ENCODE measurements at regions of chr10 and their contacts with region 1.

Region 1: GRCh38 chr10:118568327-118568848 is 27.1 kb downstream of the PRLHR start:
- DNase-seq: peak; percentile 63
- H3K4me3 ChIP-seq: no peak overlapping the region; a peak in 1 of 4 replicates
- H3K27ac ChIP-seq: no peak overlapping the region
- H3K4me1 ChIP-seq: peaks cover 0 to 29% of the 10 kb centered on the region in 2 experiments; a peak in 2 of 4 replicates
- H3K27me3 ChIP-seq: no peaks in the 10 kb centered on the region
- CTCF ChIP-seq: peak; percentile 76
- EP300 ChIP-seq: no peak
- RAD21 ChIP-seq: peak; percentile 88

Region 2: GRCh38 chr10:117568334-117568733 is 1000.1 kb before region 1 on chr10:
- CTCF ChIA-PET with region 1: no interaction called
- POLR2A ChIA-PET with region 1: no interaction called
- DNase-seq: no peak
- H3K4me3 ChIP-seq: no peak overlapping the region
- H3K27ac ChIP-seq: no peak overlapping the region
- H3K4me1 ChIP-seq: no peaks in the 10 kb centered on the region
- H3K27me3 ChIP-seq: no peaks in the 10 kb centered on the region
- CTCF ChIP-seq: no peak
- EP300 ChIP-seq: no peak
- RAD21 ChIP-seq: no peak

Region 3: GRCh38 chr10:118522791-118523498 is 45.4 kb before region 1 on chr10:
- CTCF ChIA-PET with region 1: no interaction called
- POLR2A ChIA-PET with region 1: no interaction called
- DNase-seq: no peak
- H3K4me3 ChIP-seq: no peak overlapping the region
- H3K27ac ChIP-seq: no peak overlapping the region
- H3K4me1 ChIP-seq: no peaks in the 10 kb centered on the region
- H3K27me3 ChIP-seq: no peaks in the 10 kb centered on the region
- CTCF ChIP-seq: no peak
- EP300 ChIP-seq: no peak
- RAD21 ChIP-seq: no peak

Region 4: DNA sequence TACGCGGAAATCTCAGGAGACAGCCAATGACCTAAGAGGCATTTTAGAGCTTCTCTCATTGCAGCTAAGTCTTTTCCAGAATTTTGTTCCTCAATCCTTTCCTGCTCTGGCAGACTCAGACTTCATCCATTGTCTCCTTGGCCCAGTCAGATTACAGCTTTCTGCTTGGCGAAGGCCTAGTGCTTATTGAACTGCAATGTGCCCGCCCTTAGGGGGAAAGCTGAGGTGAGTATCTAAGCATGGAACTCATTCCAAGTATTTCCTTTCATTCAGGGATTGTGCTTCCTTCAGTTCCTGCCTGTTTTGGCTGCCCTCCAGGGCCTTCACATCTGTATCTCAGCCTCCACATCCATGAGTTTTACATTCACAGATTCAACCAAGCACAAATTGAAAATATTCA is 10.4 kb before region 1 on chr10:
- CTCF ChIA-PET with region 1: interaction called, 14 read pairs
- POLR2A ChIA-PET with region 1: no interaction called
- DNase-seq: no peak
- H3K4me3 ChIP-seq: no peak overlapping the region
- H3K27ac ChIP-seq: no peak overlapping the region
- H3K4me1 ChIP-seq: no peaks in the 10 kb centered on the region
- H3K27me3 ChIP-seq: no peaks in the 10 kb centered on the region
- CTCF ChIP-seq: no peak
- EP300 ChIP-seq: no peak
- RAD21 ChIP-seq: no peak

Region 5: DNA sequence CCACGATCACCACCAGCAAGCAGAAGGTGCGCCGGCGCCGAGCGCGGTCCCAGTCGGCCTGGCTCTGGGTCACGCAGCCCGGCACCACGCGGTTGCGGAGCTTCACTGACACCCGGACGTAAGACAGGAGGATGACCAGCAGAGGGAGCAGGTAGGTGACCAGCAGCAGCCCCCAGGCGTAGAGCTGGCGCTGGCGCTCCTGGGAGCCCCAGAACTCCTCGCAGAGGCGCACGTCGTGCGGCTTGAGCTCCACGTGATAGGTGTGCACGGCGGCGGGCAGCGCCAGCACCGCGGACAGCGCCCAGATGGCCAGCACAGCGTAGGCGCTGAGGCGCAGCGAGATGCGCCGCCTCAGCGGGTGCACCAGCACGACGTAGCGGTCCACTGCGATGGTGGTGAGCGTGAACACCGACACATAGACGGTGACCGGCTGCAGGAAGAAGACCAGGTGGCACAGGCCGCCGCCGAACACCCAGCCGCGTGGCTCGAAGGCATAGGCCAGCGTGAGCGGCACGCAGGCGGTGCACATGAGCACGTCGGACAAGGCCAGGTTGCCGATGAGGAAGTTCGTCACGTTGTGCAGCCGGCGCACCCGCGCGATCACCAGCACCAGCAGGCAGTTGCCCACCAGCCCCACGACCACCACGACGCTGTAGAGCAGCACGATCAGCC is 26.1 kb after region 1 on chr10:
- CTCF ChIA-PET with region 1: interaction called, 29 read pairs
- POLR2A ChIA-PET with region 1: no interaction called
- DNase-seq: peak; percentile 75
- H3K4me3 ChIP-seq: no peak overlapping the region; a peak in 1 of 4 replicates
- H3K27ac ChIP-seq: no peak overlapping the region
- H3K4me1 ChIP-seq: peaks cover 0 to 19% of the 10 kb centered on the region in 2 experiments; a peak in 2 of 4 replicates
- H3K27me3 ChIP-seq: peaks cover 10% of the 10 kb centered on the region; the same call in 1 of the 2 replicates
- CTCF ChIP-seq: peak; percentile 23; the same call in 1 of the 2 replicates
- EP300 ChIP-seq: no peak
- RAD21 ChIP-seq: no peak; the same call in 1 of the 2 replicates

Region 6: DNA sequence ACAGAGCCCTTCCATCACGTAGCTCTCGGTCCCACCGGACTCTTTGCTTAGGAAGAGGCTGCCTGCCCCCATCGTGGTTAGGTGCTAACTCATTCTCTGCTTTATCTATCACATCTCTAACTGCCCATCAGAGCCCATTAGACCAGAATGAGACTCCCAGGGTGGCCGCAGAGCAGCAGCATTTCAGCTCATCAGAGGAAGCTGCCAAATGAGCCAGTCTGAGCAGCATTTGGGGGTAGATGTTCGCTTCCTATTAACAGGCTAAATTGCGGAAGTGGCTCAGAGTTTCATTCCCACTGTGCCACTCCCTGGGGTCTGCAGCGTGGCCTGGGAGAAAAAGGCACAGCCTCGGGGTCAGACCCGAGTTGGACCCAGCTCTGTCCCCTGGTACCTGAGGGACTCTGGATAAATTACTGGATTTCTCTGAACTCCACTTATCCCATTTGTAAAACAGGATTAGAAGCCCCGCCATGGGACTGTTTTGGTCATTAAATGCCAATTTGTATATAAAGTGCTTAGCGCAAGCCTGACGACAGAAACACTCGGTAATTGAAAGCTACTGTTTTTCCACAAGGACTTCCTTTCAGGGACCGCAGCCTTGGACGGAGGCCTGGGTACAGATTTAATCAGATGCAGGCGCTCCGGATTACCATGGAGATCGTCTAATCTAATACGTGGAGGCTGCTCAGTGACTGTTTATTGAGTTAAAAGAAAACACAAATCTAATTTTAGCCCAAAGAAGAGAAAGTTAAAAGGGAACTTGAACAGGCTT is 100.8 kb after region 1 on chr10:
- CTCF ChIA-PET with region 1: interaction called, 67 read pairs
- POLR2A ChIA-PET with region 1: interaction called, 3 read pairs
- DNase-seq: peak; percentile 81
- H3K4me3 ChIP-seq: peak overlapping the region; percentile 32 to 38
- H3K27ac ChIP-seq: peak overlapping the region; percentile 29 to 99; a peak in 3 of 4 replicates
- H3K4me1 ChIP-seq: peaks cover 14 to 50% of the 10 kb centered on the region in 2 experiments; a peak in 3 of 4 replicates
- H3K27me3 ChIP-seq: no peaks in the 10 kb centered on the region; the same call in 1 of the 2 replicates
- CTCF ChIP-seq: no peak
- EP300 ChIP-seq: peak in 1 of 2 experiments; percentile 94; a peak in 2 of 4 replicates
- RAD21 ChIP-seq: no peak; the same call in none of the 2 replicates

Region 7: DNA sequence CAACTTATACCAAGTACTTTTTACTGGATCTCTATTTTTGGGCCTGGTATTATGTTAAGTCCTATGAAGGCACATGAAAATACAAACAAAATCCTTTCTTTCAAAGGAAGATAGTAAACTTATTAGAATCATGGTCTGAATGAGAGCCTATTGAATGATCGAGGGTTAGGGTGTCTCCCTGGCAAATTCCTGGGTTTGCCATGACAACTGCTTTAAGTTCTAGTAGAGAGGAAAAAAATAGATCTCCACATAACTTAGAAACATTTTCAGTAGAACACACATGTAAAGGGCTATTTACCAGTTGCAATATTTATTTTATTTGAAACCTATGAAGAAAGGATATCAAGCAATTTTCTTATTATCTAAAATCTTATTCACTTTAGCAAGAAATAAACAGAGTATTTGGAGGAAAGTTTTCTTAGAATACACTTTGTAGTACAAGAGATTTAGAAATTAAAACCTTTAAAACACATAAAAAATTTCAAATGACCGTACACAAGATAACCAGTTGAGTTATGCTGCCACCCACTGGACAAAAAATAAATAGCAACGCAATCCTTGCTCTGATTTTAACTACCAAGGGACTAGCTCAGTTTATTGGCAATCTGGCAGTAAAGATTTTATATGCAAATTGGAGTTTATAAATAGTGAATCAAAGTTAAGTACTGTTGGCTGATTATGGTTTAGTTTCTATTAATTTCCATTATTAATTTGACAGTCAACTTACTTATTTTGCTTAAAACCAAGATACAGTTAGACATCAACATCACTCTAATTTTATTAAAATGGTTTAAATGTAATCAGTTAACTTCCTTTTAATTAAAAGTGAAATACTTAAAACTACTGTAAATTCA is 152.5 kb after region 1 on chr10:
- CTCF ChIA-PET with region 1: interaction called, 226 read pairs
- POLR2A ChIA-PET with region 1: no interaction called
- DNase-seq: peak; percentile 44
- H3K4me3 ChIP-seq: no peak overlapping the region; a peak in 1 of 4 replicates
- H3K27ac ChIP-seq: no peak overlapping the region
- H3K4me1 ChIP-seq: peaks cover 5 to 13% of the 10 kb centered on the region in 2 experiments; a peak in 3 of 4 replicates
- H3K27me3 ChIP-seq: no peaks in the 10 kb centered on the region
- CTCF ChIP-seq: peak; percentile 95
- EP300 ChIP-seq: no peak
- RAD21 ChIP-seq: peak; percentile 92

Region 8: DNA sequence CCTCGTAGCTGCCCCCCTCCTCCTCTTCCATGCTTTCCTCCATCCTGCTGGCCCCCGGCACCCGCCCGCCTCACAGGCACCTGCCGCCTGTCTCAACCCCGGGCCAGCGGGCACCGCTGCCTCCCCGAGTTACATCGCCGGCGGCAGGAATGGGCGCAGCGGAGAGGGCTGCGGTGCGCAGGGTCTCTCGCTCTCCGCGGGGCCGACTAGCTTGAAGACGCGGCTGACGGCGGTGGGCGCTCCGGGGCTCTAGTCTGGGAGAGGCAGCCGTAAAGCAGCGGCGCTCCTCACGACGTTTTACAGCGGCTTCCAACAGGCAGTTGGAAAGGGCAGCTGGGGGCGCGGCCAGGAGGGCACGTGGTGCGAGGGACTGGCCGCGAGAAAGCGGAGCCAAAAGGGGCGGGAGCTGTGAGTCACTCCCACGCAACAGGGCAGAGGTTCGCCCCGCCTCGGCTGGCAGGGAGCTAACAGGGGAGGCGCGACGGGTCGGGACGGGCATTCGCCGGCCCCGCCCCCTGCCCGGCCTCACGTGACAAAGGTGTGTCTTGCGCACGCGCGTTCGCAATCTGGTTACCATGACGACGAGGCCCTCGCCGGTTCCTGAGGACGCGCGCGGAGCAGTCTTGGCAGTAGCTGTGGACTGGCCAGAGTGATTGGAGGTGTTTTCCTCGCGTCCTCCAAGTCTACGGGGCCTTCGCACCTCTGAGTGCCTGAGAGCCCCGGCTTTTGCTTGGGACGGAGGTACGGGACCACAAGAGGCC is 186.5 kb after region 1 on chr10 and contains the start of gene CACUL1:
- CTCF ChIA-PET with region 1: interaction called, 11 read pairs
- POLR2A ChIA-PET with region 1: no interaction called
- DNase-seq: peak; percentile 100
- H3K4me3 ChIP-seq: peak within 1 kb of the TSS; percentile 86 to 91
- H3K27ac ChIP-seq: peak within 1 kb of the TSS; percentile 67 to 88
- H3K4me1 ChIP-seq: peaks cover 13 to 18% of the 10 kb centered on the region in 2 experiments; a peak in 3 of 4 replicates
- H3K27me3 ChIP-seq: no peaks in the 10 kb centered on the region
- CTCF ChIP-seq: no peak
- EP300 ChIP-seq: 0 out of 4 replicates have a peak, but pooled peaks of 1 of the 2 experiments have one; percentile 2
- RAD21 ChIP-seq: no peak
- polyA plus RNA-seq, gene CACUL1: 2.6 and 3.9 TPM in 2 replicates

Region 9: GRCh38 chr10:118850418-118851061 is 282.2 kb after region 1 on chr10:
- CTCF ChIA-PET with region 1: interaction called, 13 read pairs
- POLR2A ChIA-PET with region 1: no interaction called
- DNase-seq: peak; percentile 69
- H3K4me3 ChIP-seq: no peak overlapping the region
- H3K27ac ChIP-seq: no peak overlapping the region
- H3K4me1 ChIP-seq: no peaks in the 10 kb centered on the region
- H3K27me3 ChIP-seq: no peaks in the 10 kb centered on the region
- CTCF ChIP-seq: peak; percentile 64
- EP300 ChIP-seq: no peak
- RAD21 ChIP-seq: peak; percentile 72

Region 10: GRCh38 chr10:118958984-118959916 is 390.9 kb after region 1 on chr10:
- CTCF ChIA-PET with region 1: no interaction called
- POLR2A ChIA-PET with region 1: no interaction called
- DNase-seq: no peak
- H3K4me3 ChIP-seq: no peak overlapping the region
- H3K27ac ChIP-seq: no peak overlapping the region
- H3K4me1 ChIP-seq: peaks cover 5 to 7% of the 10 kb centered on the region in 2 experiments; a peak in 1 of 4 replicates
- H3K27me3 ChIP-seq: no peaks in the 10 kb centered on the region; the same call in 1 of the 2 replicates
- CTCF ChIP-seq: no peak
- EP300 ChIP-seq: no peak
- RAD21 ChIP-seq: no peak

Region 11: DNA sequence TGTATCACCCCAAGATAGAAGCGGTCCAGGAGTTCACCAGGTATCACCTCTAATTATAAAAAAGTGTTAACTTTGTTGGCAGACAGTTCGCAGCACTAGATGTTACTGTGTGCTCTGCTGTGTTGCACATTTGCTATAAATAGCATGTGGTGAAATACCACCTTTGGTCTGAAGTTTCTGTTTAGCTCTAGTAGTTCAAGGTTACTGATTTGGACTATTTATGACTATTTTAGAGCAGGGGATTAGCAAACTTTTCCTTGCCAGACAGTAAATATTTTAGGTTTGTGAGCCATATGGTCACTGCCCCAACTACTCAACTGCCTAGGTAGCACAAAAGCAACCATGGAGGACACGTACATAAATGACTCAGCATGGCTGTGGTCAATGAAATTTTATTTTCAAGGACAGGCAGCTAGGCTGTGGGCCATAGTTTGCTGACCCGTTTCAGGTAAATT is 552.1 kb after region 1 on chr10:
- CTCF ChIA-PET with region 1: no interaction called
- POLR2A ChIA-PET with region 1: no interaction called
- DNase-seq: no peak
- H3K4me3 ChIP-seq: no peak overlapping the region
- H3K27ac ChIP-seq: no peak overlapping the region
- H3K4me1 ChIP-seq: no peaks in the 10 kb centered on the region
- H3K27me3 ChIP-seq: no peaks in the 10 kb centered on the region
- CTCF ChIP-seq: no peak
- EP300 ChIP-seq: no peak
- RAD21 ChIP-seq: no peak

Measured in SK-N-SH (cell line).